ENCODE measurements at regions of chr7 and their contacts with region 1.

Region 1: DNA sequence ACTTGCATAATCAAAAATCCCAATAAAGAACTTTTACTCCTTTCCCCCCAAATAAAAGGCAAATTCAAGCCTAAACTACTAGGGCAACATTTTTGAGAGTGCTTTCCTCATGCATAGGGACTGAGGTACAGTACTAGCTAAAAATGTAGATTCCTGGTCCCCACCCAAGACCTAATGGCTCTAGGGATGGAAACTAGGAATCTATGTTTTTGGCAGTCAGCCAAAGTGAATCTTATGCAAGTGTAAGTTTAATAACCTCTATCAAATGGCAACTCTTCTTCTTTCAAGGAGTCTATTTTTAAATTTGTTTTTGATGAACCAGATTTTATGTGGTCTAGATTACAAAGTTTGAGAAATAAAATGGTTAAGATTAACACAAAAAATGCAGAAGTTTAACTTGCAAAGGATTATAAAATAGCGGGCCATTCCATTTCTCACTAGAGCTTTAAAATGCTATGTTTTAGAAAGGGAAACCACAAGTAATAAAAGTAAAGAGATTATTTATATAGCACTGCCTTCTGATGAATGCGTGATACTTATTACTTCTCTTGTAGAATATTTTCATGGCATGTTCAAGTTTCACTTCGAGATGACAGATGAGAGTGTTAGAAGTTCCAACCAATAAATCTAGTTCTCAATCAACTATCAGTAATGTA is 70.4 kb upstream of the MDFIC start:
- DNase-seq: no peak
- ATAC-seq: no peak

Region 2: DNA sequence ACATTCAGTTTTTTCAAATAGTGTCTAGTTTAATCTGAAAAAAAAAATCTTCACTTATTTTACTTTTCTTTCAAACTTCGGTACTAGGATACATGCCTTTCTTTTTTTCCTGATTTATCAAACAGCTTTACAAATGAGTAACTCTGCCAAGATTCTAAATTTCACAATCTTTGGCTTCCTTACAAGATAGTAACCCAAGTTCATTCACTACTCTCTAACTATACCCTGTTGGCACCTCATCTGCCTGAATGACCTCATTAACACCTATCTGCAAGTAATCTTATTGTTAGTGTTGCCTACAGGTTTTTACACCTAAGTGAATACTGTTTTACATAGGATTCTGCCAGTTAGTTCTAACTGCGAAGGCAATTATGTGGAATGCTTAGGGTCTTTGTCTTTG is 277.1 kb before region 1 on chr7:
- intact Hi-C with region 1: no loop called
- DNase-seq: no peak
- ATAC-seq: peak; percentile 69

Region 3: GRCh38 chr7:114678116-114678515 is 173.4 kb before region 1 on chr7:
- intact Hi-C with region 1: no loop called
- DNase-seq: no peak
- ATAC-seq: no peak

Region 4: DNA sequence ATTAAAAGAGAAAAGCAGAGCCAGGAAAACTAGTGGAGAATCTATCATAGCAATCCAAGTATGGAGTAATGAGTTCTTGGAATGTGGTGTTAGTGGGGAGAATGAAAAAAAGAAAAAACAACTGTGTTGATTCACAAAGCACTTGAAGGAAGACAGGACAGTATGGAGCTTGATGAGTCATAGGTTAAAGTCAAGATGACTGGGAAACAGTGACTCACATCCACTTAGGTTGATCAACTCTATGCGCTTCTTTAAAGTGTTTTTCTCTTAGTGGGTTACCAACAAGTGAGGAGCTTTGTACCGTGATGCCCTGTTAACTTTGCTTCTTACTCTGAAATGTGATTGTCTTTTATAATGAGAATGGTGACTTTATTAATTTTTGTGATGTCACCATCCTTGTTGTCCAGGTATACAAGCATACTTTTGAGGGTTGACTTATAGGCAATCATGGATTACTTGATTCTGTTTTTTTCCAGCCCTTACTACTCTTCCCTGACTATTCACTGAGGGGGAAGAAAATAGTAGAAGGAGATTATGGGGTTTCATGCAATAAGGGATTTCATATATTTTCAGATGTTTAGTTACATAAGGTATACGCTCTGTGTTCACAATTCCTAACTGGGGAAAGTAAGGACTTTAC is 38.2 kb after region 1 on chr7:
- intact Hi-C with region 1: loop called (anchors 2 kb)
- DNase-seq: no peak
- ATAC-seq: no peak

Region 5: GRCh38 chr7:115060095-115060870 is 208.7 kb after region 1 on chr7:
- intact Hi-C with region 1: no loop called
- DNase-seq: peak; percentile 45
- ATAC-seq: peak; percentile 42